ENCODE measurements at regions of chr20 and their contacts with region 1.

Region 1: DNA sequence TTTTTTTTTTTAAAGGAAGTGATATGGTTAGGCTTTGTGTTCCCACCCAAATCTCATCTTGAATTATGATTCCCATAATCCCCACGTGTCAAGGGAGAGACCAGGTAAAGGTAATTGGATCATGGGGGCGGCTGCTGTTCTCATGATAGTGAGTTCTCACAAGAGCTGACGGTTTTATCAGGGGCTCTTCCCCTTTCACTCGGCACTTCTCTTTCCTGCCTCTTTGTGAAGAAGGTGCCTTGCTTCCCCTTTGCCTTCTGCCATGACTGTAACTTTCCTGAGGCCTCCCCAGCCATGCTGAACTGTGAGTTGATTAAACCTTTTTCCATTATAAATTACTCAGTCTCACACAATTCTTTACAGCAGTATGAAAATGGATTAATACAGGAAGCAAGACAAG is 64.3 kb downstream of the ZFP64 start:
- H3K4me3 Mint-ChIP-seq: peak overlapping the region; percentile 27
- H3K27ac Mint-ChIP-seq: peak overlapping the region; percentile 82
- H3K4me1 Mint-ChIP-seq: peaks cover 15% of the 10 kb centered on the region
- H3K27me3 Mint-ChIP-seq: no peaks in the 10 kb centered on the region

Region 2: GRCh38 chr20:51776261-51776660 is 351.0 kb before region 1 on chr20:
- intact Hi-C with region 1: no loop called
- H3K4me3 Mint-ChIP-seq: no peak overlapping the region
- H3K27ac Mint-ChIP-seq: no peak overlapping the region
- H3K4me1 Mint-ChIP-seq: no peaks in the 10 kb centered on the region
- H3K27me3 Mint-ChIP-seq: no peaks in the 10 kb centered on the region

Region 3: GRCh38 chr20:52150440-52151258 is 23.3 kb after region 1 on chr20:
- intact Hi-C with region 1: loop called (anchors 1 kb)
- H3K4me3 Mint-ChIP-seq: no peak overlapping the region
- H3K27ac Mint-ChIP-seq: no peak overlapping the region
- H3K4me1 Mint-ChIP-seq: no peaks in the 10 kb centered on the region
- H3K27me3 Mint-ChIP-seq: no peaks in the 10 kb centered on the region

Region 4: DNA sequence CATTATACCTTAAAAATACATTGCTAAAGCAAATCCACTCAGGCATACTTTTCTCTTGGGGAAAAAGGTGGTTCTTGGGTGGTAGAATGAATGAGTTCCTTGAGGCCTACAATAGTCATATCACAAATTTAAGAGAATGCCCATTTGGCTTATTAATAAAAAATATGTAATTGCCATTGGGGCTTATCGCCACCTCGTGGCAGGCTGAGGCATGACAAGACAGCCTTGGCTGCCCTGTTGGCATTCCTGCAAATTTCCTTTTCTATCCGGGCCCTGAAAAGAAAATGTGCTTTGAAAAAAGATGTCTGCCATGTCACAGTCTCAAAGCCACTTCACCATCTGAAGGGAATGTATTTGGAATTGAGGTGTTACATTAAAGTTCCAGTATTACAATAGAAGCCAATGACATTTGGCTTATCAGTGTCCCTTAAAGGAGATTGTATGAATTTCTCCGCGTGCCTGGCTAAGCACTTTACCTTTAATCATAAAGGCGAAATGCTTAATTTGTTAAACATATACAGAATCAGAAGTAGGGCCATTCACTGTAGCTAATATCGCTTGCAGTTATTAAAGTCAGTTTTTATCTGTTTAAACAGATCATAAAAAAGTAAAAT is 252.5 kb after region 1 on chr20:
- intact Hi-C with region 1: loop called (anchors 5 kb)
- H3K4me3 Mint-ChIP-seq: no peak overlapping the region
- H3K27ac Mint-ChIP-seq: no peak overlapping the region
- H3K4me1 Mint-ChIP-seq: no peaks in the 10 kb centered on the region
- H3K27me3 Mint-ChIP-seq: peaks cover 4% of the 10 kb centered on the region

Measured in dendritic cell treated with granulocyte-macrophage colony-stimulating factor and Interleukin-4, amounts not matched to agents 40 ng/mL and 50 ng/mL, for 4 days (primary cell).